ENCODE measurements at regions of chr17 and their contacts with region 1.

Region 1: GRCh38 chr17:43388359-43389045 is 10.3 kb upstream of the ARL4D start:
- DNase-seq: peak; percentile 97
- H3K4me3 ChIP-seq: peak overlapping the region; percentile 57 to 65 (median 64)
- H3K27ac ChIP-seq: peak overlapping the region; percentile 98 to 100 (median 99)
- H3K4me1 ChIP-seq: peaks cover 0 to 21% (median 12%) of the 10 kb centered on the region in 4 donors
- H3K27me3 ChIP-seq: no peaks in the 10 kb centered on the region
- CTCF ChIP-seq: no peak
- EP300 ChIP-seq: no peak
- POLR2A ChIP-seq: peak; percentile 94 to 95

Region 2: DNA sequence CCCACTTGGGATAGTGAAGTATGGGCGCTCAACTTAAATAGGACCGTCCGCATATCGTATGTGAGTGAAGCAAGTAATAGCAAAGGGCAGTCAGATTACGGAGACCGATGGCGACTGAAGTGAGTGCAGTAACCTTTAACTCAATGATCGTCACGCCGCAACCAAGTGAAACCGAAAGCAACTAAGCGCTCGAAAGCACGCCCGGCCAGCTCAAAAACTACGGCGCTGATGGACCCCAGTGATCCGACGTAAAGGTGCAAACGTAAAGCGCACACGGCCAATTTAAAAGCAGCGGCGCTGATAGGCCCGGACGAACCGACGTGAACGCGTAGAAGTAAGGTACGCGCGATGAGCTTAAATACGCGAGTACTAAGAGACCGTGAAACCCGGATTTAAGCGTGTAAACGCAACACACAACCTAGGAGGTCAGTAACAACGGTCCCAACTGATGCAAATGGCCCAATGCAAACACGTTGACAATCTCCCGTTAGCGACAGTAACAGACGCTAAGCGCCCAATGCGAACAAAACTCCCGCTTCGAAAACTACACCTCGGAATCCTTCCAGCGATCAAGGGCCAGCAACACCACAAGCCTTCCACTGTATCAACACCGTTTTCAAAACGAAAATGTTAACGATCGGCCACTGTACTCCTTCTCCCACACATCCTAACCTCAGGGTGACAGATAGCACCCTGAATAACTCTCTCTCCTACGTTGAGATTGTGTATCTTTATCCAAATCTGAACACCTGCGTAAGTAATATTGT is 27.6 kb before region 1 on chr17:
- intact Hi-C with region 1: loop called (anchors 2 kb)
- DNase-seq: peak; percentile 98
- H3K4me3 ChIP-seq: peak overlapping the region; percentile 55 to 67 (median 58)
- H3K27ac ChIP-seq: peak overlapping the region; percentile 90 to 95 (median 92)
- H3K4me1 ChIP-seq: peaks cover 0 to 18% (median 15%) of the 10 kb centered on the region in 4 donors
- H3K27me3 ChIP-seq: no peaks in the 10 kb centered on the region
- CTCF ChIP-seq: no peak
- EP300 ChIP-seq: peak in 3 of 4 donors; percentile 45 to 74 (median 53)
- POLR2A ChIP-seq: peak; percentile 100

Region 3: DNA sequence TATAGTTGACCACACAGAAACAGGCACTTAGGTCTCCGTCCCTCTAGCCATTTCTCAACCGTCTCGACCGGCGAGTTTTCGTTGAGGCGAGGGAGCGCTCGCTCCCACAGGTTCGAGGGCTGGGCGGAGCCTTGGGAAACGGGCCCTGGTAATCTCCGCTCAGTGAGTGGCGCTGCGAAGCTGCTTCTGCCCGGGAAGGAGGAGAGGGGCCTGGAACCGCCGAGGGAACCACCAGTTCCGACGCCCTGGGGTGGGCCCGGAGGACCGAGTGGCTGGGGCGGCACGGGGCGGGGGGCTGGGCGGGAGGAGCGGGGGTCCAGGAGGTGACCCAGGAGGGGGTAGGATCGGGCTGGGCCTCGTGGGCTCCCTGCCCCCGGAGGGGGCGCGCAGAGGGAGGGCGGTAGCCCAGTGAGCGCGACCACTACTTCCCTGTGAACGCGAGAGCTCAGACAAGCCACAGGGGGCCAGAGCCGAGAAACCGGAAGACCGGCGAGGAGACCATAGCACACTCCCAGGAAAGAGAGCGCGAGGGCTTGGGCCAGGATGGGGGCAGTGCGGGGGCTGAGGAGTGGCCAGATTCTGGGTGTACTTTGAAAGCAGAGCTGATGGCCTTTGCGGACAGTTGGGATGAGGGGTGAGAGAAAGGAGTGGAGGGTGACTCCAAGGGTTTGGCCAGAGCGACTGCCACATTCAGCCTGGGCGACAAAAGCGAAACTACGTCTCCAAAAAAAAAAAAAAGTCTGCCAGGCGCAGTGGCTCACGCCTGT is 19.6 kb before region 1 on chr17:
- intact Hi-C with region 1: loop called (anchors 1 kb)
- DNase-seq: peak; percentile 94
- H3K4me3 ChIP-seq: peak overlapping the region; percentile 46 to 55 (median 54)
- H3K27ac ChIP-seq: peak overlapping the region; percentile 99 to 100 (median 100)
- H3K4me1 ChIP-seq: peaks cover 0 to 49% (median 43%) of the 10 kb centered on the region in 4 donors
- H3K27me3 ChIP-seq: no peaks in the 10 kb centered on the region
- CTCF ChIP-seq: no peak
- EP300 ChIP-seq: no peak
- POLR2A ChIP-seq: peak; percentile 21